T-cell (primary cell): ENCODE measurements at regions of chr1 and their contacts with region 1.

Region 1: DNA sequence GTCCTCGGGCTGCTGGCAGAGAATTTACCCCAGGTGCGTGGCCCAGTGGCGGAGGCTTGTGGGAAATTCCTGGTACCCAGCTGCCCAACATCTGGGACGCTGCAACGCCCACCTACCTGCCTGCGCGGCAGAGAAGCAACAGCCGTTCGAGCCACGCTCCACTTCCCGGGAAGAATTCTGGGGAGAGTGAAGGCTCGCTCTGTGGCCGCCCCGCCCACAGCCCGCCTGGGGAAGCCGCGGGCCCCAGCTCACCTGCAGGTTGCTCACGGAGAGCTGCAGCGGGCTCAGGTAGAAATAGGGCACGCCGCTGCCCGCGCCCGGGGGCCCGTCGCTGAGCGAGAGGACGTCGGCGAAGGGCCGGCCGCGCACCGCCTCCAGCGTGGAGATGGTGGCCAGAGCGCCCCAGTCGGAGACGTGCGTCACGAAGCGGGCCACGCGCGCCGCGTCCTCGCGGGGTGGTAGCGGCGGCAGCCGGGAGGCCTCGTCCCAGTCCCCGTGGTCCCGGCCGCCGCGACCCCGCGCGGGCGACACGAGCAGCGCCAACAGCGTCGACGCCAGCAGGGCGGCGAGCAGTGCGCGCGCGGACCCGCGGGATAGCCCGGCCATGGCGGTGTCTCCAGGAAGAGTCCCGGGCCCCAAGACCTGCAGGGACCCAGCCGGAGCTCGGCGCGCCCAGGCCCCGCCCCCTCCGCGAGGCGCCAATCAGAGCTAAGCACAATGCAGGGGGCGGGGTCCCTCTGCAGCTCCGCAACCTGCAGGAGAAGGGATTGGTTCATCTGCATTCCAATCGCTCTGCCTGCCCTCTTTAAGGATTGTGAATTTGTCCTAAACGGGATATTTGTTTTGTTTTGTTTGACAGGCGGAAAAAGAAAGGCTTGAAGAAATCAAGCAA is at the start of gene CREG1:
- DNase-seq: peak; percentile 74 to 94 (median 84)
- ATAC-seq: peak; percentile 98 to 99 (median 98)
- H3K4me3 ChIP-seq: peak within 1 kb of the TSS; percentile 69 to 71
- H3K4me3 Mint-ChIP-seq: peak within 1 kb of the TSS; percentile 86 to 90 (median 86)
- H3K27ac ChIP-seq: no peak within 1 kb of the TSS
- H3K27ac Mint-ChIP-seq: peak within 1 kb of the TSS; percentile 75 to 86
- H3K4me1 ChIP-seq: peaks cover 6 to 23% of the 10 kb centered on the region in 2 experiments
- H3K4me1 Mint-ChIP-seq: peaks cover 40 to 44% (median 44%) of the 10 kb centered on the region in 3 donors
- H3K27me3 ChIP-seq: no peaks in the 10 kb centered on the region
- H3K27me3 Mint-ChIP-seq: no peaks in the 10 kb centered on the region
- total RNA-seq, gene CREG1: 9.1 to 13.0 (median 10.9) TPM

Region 2: GRCh38 chr1:166999090-166999489 is 554.3 kb before region 1 on chr1:
- CTCF ChIA-PET with region 1: no interaction called
- POLR2A ChIA-PET with region 1: no interaction called
- DNase-seq: no peak
- ATAC-seq: no peak
- H3K4me3 ChIP-seq: no peak overlapping the region
- H3K4me3 Mint-ChIP-seq: no peak overlapping the region
- H3K27ac ChIP-seq: no peak overlapping the region
- H3K27ac Mint-ChIP-seq: no peak overlapping the region
- H3K4me1 ChIP-seq: no peaks in the 10 kb centered on the region
- H3K4me1 Mint-ChIP-seq: peaks cover 0 to 4% (median 0%) of the 10 kb centered on the region in 3 donors
- H3K27me3 ChIP-seq: peaks cover 0 to 7% of the 10 kb centered on the region in 2 experiments
- H3K27me3 Mint-ChIP-seq: peaks cover 6 to 8% of the 10 kb centered on the region in 2 donors

Region 3: DNA sequence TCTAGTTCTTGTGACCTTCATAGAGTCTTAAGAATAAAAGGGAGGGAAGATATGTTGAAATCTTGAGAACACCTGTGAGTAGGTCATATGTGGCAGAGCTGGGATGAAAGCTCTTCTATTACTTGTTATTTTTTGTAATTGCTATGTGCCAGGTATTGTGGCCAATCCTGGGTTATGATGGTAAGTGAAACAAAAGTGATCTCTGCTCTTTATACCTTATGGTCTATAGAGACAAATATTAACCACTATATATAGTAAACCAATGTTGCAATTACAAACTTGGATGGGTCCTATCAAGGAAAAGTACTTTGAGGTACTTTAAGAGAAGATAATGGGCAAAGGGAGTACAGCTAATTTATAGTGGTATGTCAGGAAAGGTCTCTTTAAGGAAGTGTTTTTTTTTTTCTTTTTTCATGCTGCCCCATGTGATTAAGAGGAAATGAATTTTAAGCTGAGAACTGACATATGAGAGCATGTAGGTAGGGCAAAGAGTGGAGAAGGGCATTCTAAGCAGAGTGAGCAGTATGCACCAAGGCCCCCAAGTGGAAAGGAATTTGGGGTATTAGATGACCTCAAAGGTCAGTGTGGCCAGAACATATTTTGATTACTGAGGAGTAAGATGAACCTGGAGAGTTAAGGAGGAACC is 289.4 kb before region 1 on chr1:
- CTCF ChIA-PET with region 1: interaction called, 10 to 15 read pairs
- POLR2A ChIA-PET with region 1: no interaction called
- DNase-seq: peak in 1 of 35 experiments; percentile 25
- ATAC-seq: peak in 3 of 4 experiments; percentile 31 to 60 (median 59)
- H3K4me3 ChIP-seq: no peak overlapping the region
- H3K4me3 Mint-ChIP-seq: no peak overlapping the region
- H3K27ac ChIP-seq: peak overlapping the region; percentile 10
- H3K27ac Mint-ChIP-seq: no peak overlapping the region
- H3K4me1 ChIP-seq: peaks cover 9 to 27% of the 10 kb centered on the region in 2 experiments
- H3K4me1 Mint-ChIP-seq: peaks cover 17 to 31% (median 20%) of the 10 kb centered on the region in 3 donors
- H3K27me3 ChIP-seq: no peaks in the 10 kb centered on the region
- H3K27me3 Mint-ChIP-seq: no peaks in the 10 kb centered on the region

Region 4: DNA sequence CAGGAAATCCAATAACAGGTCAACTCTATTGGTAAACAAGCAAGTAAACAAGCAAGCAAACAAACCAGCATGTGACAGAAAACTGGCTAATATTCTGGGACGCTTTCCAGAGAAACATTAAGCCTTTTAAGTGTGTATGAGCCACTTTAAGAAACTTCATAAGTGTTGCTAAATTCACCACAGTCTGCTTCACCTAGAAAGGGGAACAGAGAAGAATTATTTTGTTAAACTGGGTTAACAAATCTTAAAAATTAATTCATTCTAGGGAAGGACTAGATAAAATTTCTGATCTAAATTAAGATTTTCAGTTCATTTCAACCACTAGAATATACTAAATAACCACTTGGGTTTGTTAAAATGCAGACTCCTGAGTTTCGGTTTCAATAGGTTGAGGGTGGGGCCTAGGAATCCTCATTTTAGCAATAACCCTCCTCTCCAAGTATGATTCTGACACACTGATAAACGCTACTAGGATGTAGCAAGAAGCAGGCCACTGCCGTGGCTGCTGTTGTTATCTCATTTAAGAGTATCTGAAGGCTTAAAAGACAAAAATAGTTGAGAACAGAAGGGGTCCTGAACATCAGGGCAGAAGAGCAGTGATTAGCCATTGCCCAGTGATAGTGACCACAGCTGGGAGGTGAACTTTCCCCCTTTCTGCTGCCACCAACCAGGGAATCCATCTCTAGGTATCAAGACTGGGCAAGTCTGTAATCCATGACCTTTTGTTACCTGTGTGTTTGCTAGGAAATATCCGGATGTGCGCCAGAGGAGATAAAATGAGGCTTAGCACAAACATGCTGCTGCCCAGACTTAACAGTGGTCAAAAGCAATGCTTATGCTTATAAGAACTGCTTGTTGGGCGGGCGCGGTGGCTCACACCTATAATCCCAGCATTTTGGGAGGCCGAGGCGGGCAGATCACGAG is 11.0 kb before region 1 on chr1:
- CTCF ChIA-PET with region 1: interaction called, 8 to 18 read pairs
- POLR2A ChIA-PET with region 1: interaction called, 4 to 5 read pairs
- DNase-seq: no peak
- ATAC-seq: no peak
- H3K4me3 ChIP-seq: no peak overlapping the region
- H3K4me3 Mint-ChIP-seq: no peak overlapping the region
- H3K27ac ChIP-seq: no peak overlapping the region
- H3K27ac Mint-ChIP-seq: no peak overlapping the region
- H3K4me1 ChIP-seq: no peaks in the 10 kb centered on the region
- H3K4me1 Mint-ChIP-seq: peaks cover 7 to 24% (median 10%) of the 10 kb centered on the region in 3 donors
- H3K27me3 ChIP-seq: no peaks in the 10 kb centered on the region
- H3K27me3 Mint-ChIP-seq: no peaks in the 10 kb centered on the region

Region 5: DNA sequence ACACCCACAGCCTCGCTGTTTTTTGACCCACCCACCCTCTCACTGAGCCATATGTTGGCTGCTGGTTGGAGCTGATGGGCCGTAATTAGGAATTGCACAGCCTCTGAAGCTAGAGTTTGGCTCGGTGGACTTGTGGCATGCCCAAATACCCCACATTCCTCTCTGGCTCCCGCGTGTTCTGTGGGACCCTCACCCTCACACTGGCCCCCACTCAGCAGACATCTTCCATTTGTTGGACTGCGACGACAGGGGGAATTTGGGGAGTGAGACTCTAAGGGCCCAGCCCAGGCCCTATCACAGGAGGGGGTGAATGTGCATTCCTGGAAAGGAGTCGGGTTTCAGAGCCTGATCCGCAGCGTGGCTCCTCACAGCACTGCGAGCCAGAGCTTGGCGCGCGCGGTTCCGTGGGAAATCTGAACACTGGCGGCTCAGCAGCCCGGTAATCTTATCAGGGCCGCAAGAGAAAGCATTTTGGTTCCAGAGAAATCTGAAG is 81.8 kb after region 1 on chr1:
- CTCF ChIA-PET with region 1: interaction called in 1 of 2 experiments, 11 read pairs
- POLR2A ChIA-PET with region 1: no interaction called
- DNase-seq: no peak
- ATAC-seq: no peak
- H3K4me3 ChIP-seq: no peak overlapping the region
- H3K4me3 Mint-ChIP-seq: peak overlapping the region in 1 of 3 donors; percentile 92
- H3K27ac ChIP-seq: peak overlapping the region; percentile 49
- H3K27ac Mint-ChIP-seq: peak overlapping the region; percentile 94 to 97
- H3K4me1 ChIP-seq: peaks cover 64 to 82% of the 10 kb centered on the region in 2 experiments
- H3K4me1 Mint-ChIP-seq: peaks cover 85 to 95% (median 89%) of the 10 kb centered on the region in 3 donors
- H3K27me3 ChIP-seq: no peaks in the 10 kb centered on the region
- H3K27me3 Mint-ChIP-seq: no peaks in the 10 kb centered on the region

Region 6: GRCh38 chr1:167773516-167773915 is 220.1 kb after region 1 on chr1:
- CTCF ChIA-PET with region 1: no interaction called
- POLR2A ChIA-PET with region 1: interaction called in 1 of 2 experiments, 11 read pairs
- DNase-seq: no peak
- ATAC-seq: no peak
- H3K4me3 ChIP-seq: no peak overlapping the region
- H3K4me3 Mint-ChIP-seq: no peak overlapping the region
- H3K27ac ChIP-seq: no peak overlapping the region
- H3K27ac Mint-ChIP-seq: no peak overlapping the region
- H3K4me1 ChIP-seq: peaks cover 0 to 13% of the 10 kb centered on the region in 2 experiments
- H3K4me1 Mint-ChIP-seq: peaks cover 5 to 17% (median 12%) of the 10 kb centered on the region in 3 donors
- H3K27me3 ChIP-seq: no peaks in the 10 kb centered on the region
- H3K27me3 Mint-ChIP-seq: no peaks in the 10 kb centered on the region